MCF 10A (cell line): ENCODE measurements at regions of chr16 and their contacts with region 1.

Region 1: DNA sequence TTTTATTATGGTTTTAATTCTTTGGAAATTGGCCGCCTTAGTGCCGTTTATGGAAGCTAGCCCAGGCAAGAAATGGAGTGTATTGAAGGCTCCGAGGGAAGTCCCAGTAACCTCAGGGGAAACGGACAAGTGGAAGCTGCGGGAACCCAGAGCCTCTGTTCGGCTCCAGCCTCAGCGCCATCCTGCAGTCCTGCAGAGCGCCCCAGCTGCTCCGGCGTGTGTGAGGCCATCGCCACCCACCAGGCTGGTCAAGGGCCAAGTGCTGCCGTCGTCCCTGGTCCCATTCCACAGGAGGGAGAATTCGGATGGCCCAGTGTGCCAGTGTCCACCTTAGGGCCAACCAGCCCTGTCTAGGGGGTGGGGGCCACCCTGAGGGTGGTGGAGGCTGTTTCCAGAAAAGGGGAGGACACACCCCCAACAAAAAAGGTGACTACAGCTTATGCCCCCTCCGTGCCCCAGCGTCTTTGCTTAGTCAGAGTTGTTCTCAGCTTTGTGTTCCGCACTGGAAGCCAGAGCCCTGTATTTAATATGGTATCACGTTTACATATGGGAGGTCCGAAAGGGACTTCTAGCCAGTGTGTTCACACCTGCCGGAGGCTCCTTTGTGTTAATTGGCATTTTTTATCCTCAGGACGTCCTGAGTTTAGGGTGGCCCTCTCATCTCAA is 13.0 kb downstream of the MGRN1 start:
- DNase-seq: no peak
- H3K4me3 Mint-ChIP-seq: no peak overlapping the region
- H3K27ac Mint-ChIP-seq: no peak overlapping the region
- H3K4me1 Mint-ChIP-seq: no peaks in the 10 kb centered on the region
- H3K27me3 Mint-ChIP-seq: no peaks in the 10 kb centered on the region
- CTCF ChIP-seq: no peak

Region 2: GRCh38 chr16:4591706-4592470 is 45.7 kb before region 1 on chr16:
- CTCF ChIA-PET with region 1: no interaction called
- POLR2A ChIA-PET with region 1: no interaction called
- intact Hi-C with region 1: no loop called
- DNase-seq: no peak
- H3K4me3 Mint-ChIP-seq: no peak overlapping the region
- H3K27ac Mint-ChIP-seq: no peak overlapping the region
- H3K4me1 Mint-ChIP-seq: no peaks in the 10 kb centered on the region
- H3K27me3 Mint-ChIP-seq: no peaks in the 10 kb centered on the region
- CTCF ChIP-seq: no peak

Region 3: GRCh38 chr16:4624015-4624826 is 13.4 kb before region 1 on chr16 and contains the start of gene MGRN1:
- CTCF ChIA-PET with region 1: interaction called, 22 read pairs
- POLR2A ChIA-PET with region 1: interaction called, 3 read pairs
- intact Hi-C with region 1: no loop called
- DNase-seq: peak; percentile 97
- H3K4me3 Mint-ChIP-seq: peak within 1 kb of the TSS; percentile 99
- H3K27ac Mint-ChIP-seq: peak within 1 kb of the TSS; percentile 99
- H3K4me1 Mint-ChIP-seq: peaks cover 13% of the 10 kb centered on the region
- H3K27me3 Mint-ChIP-seq: no peaks in the 10 kb centered on the region
- CTCF ChIP-seq: peak; percentile 89
- total RNA-seq, gene MGRN1: 61.3 and 62.9 TPM in 2 replicates